ENCODE measurements at regions of chr3 and their contacts with region 1.

Region 1: DNA sequence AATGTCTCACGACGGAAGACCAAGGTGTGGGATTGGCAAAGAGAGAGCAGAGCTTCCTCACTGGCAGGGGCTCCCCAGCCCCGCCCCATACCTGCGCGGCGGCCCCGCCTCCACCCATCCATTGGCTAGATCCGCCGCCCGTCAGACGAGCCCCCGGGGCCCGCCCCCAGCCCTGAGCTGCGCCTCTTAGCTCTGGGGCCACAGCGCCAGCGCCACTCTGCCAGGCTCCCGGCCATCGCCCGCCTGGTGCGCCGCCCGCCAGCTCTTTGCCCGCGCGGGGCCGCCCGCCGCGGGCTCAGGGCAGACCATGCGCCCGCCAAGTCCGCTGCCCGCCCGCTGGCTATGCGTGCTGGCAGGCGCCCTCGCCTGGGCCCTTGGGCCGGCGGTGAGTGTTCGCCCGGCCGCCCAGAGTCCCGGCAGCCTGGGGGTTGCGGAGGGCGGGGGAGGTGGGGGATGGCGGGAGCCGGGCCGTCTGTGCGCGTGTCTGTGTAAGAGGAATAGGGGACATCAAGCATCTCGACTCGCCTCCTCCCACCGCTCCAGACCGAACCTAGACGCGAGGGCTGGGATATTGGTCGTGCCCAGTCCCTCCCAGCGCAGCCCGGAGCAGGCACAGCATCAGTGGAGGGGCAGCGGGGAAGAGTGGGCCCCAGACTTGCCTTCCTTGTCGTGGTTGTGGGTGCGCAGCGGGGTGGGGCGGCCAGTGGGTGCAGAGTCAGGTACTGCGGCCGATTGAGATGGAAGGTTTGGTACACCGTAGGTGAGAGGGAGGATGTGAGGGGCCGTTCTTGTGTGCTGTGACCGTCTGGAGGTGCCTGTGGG is at the start of gene VIPR1:
- DNase-seq: peak in 13 of 14 experiments; percentile 90 to 98 (median 95)
- ATAC-seq: peak; percentile 96
- H3K4me3 ChIP-seq: peak within 1 kb of the TSS; percentile 76
- H3K4me3 Mint-ChIP-seq: peak within 1 kb of the TSS; percentile 91
- H3K27ac ChIP-seq: peak within 1 kb of the TSS; percentile 29 to 59
- H3K27ac Mint-ChIP-seq: peak within 1 kb of the TSS; percentile 87
- H3K4me1 ChIP-seq: peaks cover 54% of the 10 kb centered on the region
- H3K4me1 Mint-ChIP-seq: peaks cover 56% of the 10 kb centered on the region
- H3K27me3 ChIP-seq: peaks cover 10 to 14% of the 10 kb centered on the region in 2 experiments
- H3K27me3 Mint-ChIP-seq: peaks cover 22% of the 10 kb centered on the region
- CTCF ChIP-seq: no peak
- total RNA-seq, gene VIPR1: 66.8 to 67.6 TPM

Region 2: DNA sequence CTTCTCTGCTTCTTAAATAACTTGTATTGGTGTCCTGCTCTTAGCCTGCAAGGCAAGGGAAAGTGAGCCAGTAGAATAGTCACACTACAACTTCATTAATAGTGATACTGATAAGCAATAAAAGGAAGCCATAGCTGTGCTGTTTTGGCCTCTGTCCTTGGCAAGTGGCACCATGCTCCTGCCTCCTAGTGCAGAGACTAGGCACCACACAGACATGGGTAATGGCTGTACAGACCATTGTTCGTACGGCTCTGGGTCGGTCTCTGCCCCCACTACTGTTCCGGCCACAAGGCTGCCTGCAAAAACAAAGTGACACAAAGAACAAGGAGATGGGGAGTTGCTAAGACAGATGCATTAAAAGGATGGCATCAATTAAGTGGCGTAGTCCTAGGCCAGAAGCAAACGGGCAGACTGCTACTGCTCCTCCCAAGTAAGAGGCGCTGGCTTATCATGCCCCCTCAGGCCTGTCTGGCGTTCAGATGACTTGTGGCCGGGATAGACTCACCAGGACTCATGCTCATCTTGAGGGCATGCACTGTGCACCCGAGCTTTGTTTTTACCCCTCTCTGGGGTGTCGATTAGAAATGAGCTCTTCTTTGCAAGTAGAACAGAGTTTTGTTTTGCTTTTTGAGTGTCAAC is 335.9 kb before region 1 on chr3:
- CTCF ChIA-PET with region 1: no interaction called
- POLR2A ChIA-PET with region 1: no interaction called
- intact Hi-C with region 1: no loop called
- DNase-seq: no peak
- ATAC-seq: no peak
- H3K4me3 ChIP-seq: no peak overlapping the region
- H3K4me3 Mint-ChIP-seq: no peak overlapping the region
- H3K27ac ChIP-seq: no peak overlapping the region
- H3K27ac Mint-ChIP-seq: no peak overlapping the region
- H3K4me1 ChIP-seq: peaks cover 3% of the 10 kb centered on the region
- H3K4me1 Mint-ChIP-seq: peaks cover 30% of the 10 kb centered on the region
- H3K27me3 ChIP-seq: no peaks in the 10 kb centered on the region
- H3K27me3 Mint-ChIP-seq: no peaks in the 10 kb centered on the region
- CTCF ChIP-seq: no peak

Region 3: DNA sequence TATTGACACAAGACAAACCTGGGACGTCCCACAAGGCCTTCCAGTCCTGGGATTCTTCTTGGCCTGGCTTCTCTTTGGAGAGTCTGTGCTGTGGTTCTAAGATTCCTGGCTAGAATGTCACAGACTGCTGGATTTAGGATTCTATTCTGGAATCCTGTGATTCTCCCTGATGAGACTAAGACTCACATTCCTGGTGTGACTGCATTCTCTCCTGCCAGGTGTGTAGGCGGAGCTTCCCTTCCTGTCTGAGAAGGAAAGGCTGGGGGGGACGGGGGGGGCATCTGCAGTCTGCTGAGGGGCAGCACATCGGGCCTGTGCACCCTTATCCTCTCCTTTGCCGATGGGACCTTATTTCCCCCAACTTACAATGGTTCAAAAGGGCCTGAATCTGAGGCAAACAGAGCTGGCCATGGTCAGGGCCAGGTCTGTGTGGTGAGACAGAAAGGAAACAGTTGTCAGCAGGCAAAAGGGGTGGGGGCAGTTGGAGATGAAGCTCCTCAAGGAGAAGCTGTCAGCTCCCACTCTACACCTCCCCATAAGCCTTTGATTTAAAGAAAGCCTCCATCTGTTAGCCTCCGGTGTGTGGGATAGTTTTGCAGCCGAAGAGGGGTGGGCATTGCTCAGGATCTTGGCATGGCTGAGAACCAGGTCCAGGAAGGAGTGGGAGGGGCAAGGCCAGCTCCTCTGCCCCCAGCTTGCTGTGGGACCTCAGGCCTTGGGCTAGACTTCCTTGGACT is 30.7 kb after region 1 on chr3:
- CTCF ChIA-PET with region 1: interaction called, 15 read pairs
- POLR2A ChIA-PET with region 1: interaction called, 30 read pairs
- intact Hi-C with region 1: no loop called
- DNase-seq: no peak
- ATAC-seq: no peak
- H3K4me3 ChIP-seq: no peak overlapping the region
- H3K4me3 Mint-ChIP-seq: no peak overlapping the region
- H3K27ac ChIP-seq: no peak overlapping the region
- H3K27ac Mint-ChIP-seq: peak overlapping the region; percentile 88
- H3K4me1 ChIP-seq: peaks cover 75% of the 10 kb centered on the region
- H3K4me1 Mint-ChIP-seq: peaks cover 82% of the 10 kb centered on the region
- H3K27me3 ChIP-seq: no peaks in the 10 kb centered on the region
- H3K27me3 Mint-ChIP-seq: no peaks in the 10 kb centered on the region
- CTCF ChIP-seq: no peak

Region 4: DNA sequence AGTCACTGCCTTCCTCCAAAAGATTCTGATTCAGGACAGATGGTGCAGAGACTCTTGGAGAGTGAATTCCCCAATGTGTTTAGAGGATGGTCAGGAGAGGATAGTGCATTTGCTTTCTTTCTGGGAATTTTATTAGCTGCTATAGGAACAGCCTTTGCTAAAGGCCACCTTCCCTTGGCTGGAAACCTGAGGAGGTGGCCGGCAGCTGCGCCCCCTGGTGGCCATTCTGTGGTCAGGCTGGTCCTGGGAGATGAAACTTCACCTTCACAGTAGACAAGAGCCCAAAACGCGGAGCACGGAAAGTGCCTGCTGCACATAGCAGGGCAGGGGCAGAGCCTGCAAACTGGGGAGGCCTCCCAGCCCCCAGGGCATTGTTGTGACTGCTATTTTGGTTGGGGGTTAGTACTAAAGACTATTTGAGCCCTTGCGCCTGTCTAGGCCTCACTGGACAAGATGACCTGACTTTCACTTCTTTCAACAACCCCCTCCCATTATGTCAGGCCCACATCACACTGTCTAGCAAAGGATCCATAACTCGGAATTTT is 44.8 kb after region 1 on chr3:
- CTCF ChIA-PET with region 1: interaction called, 31 read pairs
- POLR2A ChIA-PET with region 1: interaction called, 11 read pairs
- intact Hi-C with region 1: no loop called
- DNase-seq: peak; percentile 44 to 83 (median 64)
- ATAC-seq: peak; percentile 79
- H3K4me3 ChIP-seq: no peak overlapping the region
- H3K4me3 Mint-ChIP-seq: no peak overlapping the region
- H3K27ac ChIP-seq: no peak overlapping the region
- H3K27ac Mint-ChIP-seq: no peak overlapping the region
- H3K4me1 ChIP-seq: peaks cover 8% of the 10 kb centered on the region
- H3K4me1 Mint-ChIP-seq: peaks cover 8% of the 10 kb centered on the region
- H3K27me3 ChIP-seq: no peaks in the 10 kb centered on the region
- H3K27me3 Mint-ChIP-seq: no peaks in the 10 kb centered on the region
- CTCF ChIP-seq: peak; percentile 98

Region 5: GRCh38 chr3:42581709-42582473 is 79.3 kb after region 1 on chr3 and contains the start of gene SEC22C:
- CTCF ChIA-PET with region 1: no interaction called
- POLR2A ChIA-PET with region 1: interaction called, 18 read pairs
- intact Hi-C with region 1: no loop called
- DNase-seq: peak; percentile 90 to 97 (median 94)
- ATAC-seq: peak; percentile 89
- H3K4me3 ChIP-seq: peak within 1 kb of the TSS; percentile 76
- H3K4me3 Mint-ChIP-seq: peak within 1 kb of the TSS; percentile 93
- H3K27ac ChIP-seq: peak within 1 kb of the TSS; percentile 92 to 98
- H3K27ac Mint-ChIP-seq: peak within 1 kb of the TSS; percentile 98
- H3K4me1 ChIP-seq: peaks cover 17% of the 10 kb centered on the region
- H3K4me1 Mint-ChIP-seq: peaks cover 48% of the 10 kb centered on the region
- H3K27me3 ChIP-seq: no peaks in the 10 kb centered on the region
- H3K27me3 Mint-ChIP-seq: no peaks in the 10 kb centered on the region
- CTCF ChIP-seq: peak; percentile 44
- total RNA-seq, gene SEC22C: 73.6 to 75.4 TPM

Region 6: DNA sequence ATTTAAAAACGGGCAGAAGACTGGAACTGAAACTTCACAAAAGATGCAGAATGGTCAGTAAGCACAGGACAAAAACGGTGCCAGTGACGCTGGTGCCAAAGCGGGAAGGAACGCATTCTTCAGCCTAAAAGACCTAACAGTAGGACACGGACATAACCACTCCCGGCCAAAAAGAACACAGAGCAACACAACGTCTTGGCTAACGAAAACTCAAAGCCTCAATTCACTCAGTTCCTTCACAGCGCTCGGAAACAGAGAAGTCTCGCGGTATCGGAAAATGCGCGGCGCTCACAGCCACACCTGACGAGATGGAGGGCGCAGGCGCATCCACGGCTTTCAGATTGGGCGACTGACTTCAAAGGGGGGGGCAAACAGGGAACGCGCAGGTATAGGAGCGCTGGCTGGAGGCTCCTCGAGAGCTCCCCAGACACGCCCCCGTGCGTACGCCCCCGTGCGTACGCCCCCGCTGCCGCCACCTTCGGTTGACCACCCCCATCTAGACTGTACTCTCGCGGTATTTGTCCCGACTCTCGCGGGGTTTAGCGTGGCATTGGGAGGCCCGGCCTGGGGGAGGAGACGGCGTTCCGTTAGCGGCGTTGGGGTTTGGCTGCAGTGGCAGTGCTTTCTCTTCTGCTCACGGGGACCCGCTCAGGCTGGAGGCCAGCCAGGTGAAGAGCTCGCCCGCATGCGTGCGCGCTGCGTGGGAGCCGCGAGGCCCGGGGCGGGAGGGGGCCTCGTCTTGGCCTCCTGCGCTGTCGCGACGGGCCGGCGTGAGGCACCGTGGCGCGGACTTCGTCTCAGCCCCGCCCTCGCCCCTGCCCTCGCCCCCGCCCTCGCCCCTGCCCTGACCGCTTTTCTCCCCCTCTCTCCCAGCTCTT is 97.7 kb after region 1 on chr3 and contains the start of gene NKTR:
- CTCF ChIA-PET with region 1: interaction called, 13 read pairs
- POLR2A ChIA-PET with region 1: interaction called, 14 read pairs
- intact Hi-C with region 1: loop called in 1 of 2 experiments (anchors 1 kb)
- DNase-seq: peak; percentile 99 to 100 (median 99)
- ATAC-seq: peak; percentile 93
- H3K4me3 ChIP-seq: peak within 1 kb of the TSS; percentile 95
- H3K4me3 Mint-ChIP-seq: peak within 1 kb of the TSS; percentile 98
- H3K27ac ChIP-seq: peak within 1 kb of the TSS; percentile 63 to 72
- H3K27ac Mint-ChIP-seq: peak within 1 kb of the TSS; percentile 99
- H3K4me1 ChIP-seq: peaks cover 22% of the 10 kb centered on the region
- H3K4me1 Mint-ChIP-seq: peaks cover 40% of the 10 kb centered on the region
- H3K27me3 ChIP-seq: no peaks in the 10 kb centered on the region
- H3K27me3 Mint-ChIP-seq: no peaks in the 10 kb centered on the region
- CTCF ChIP-seq: no peak
- total RNA-seq, gene NKTR: 236 to 249 TPM

Region 7: DNA sequence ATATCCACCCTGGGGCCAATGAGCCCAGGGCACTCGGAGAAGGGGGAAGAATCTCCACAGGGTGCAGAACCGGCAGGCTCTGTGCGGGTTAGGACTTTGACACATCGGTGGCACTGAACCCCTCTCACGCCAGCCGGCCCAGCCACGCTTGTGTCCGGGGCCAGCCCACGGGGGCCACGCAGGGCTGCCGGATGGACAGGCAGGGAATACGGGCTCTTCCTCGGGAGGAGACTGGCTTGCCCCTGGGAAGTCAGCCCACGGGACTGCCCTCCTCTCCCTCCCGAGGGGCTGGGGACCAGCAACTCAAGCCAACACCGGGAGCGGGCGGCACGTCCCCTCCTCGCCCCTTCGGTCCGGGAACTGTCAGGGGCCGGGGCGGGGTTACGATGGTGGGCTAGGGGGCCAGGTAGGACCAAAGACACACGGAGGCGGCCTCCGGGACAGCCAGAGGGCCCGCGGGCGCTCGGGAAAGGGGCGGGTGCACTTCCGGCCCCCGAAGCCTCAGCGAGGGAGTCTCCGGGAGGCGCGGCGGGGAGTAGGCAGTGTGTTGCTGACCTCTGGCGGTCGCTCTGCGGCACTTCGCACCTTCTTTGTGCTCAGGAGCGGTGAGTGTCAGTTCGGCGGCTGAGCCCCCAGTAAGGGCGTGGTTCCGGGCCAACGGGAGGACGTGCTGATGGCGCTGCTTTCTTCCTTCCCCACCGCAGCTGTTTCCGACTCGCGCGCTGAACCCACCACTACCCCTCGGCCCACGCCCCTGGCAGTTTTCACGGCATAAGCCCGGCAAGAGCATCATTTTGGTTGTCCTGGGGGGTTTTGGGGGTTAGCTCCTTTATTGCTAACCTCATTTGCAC is 378.2 kb after region 1 on chr3:
- CTCF ChIA-PET with region 1: no interaction called
- POLR2A ChIA-PET with region 1: interaction called, 4 read pairs
- intact Hi-C with region 1: loop called in 1 of 2 experiments (anchors 5 kb)
- DNase-seq: peak; percentile 73 to 94 (median 84)
- ATAC-seq: peak; percentile 98
- H3K4me3 ChIP-seq: peak overlapping the region; percentile 78
- H3K4me3 Mint-ChIP-seq: peak overlapping the region; percentile 78
- H3K27ac ChIP-seq: peak overlapping the region; percentile 13 to 46
- H3K27ac Mint-ChIP-seq: peak overlapping the region; percentile 69
- H3K4me1 ChIP-seq: peaks cover 15% of the 10 kb centered on the region
- H3K4me1 Mint-ChIP-seq: peaks cover 17% of the 10 kb centered on the region
- H3K27me3 ChIP-seq: peaks cover 0 to 6% of the 10 kb centered on the region in 2 experiments
- H3K27me3 Mint-ChIP-seq: no peaks in the 10 kb centered on the region
- CTCF ChIP-seq: peak; percentile 89

Measured in CD4-positive, alpha-beta T cell (primary cell).